Pancreas (tissue), 10 donors: ENCODE measurements at regions of chrX and their contacts with region 1.

Region 1: DNA sequence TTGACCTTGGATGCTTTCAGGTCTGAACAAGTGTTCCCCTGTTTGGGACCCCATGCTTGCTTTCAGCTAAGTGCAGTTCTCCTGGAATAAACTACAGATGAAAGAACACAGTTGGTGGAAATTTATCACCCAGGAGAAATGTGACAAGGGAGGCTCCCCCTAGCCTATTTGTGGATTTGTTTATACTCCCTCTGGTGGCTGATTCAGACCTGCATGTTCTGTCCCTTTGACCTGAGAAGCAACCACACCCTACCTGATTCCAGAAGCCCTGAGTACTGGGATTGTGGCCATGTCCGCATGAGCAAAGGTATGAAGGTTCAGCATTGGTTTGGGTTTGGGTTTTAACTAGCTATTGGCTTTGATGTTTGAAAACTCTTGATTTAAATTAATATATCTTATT is 440.9 kb downstream of the MID1IP1 start:
- DNase-seq: peak in 2 of 6 donors; percentile 10 to 38
- ATAC-seq: peak; percentile 53 to 91 (median 84)
- H3K4me3 ChIP-seq: no peak overlapping the region
- H3K27ac ChIP-seq: no peak overlapping the region
- H3K4me1 ChIP-seq: no peaks in the 10 kb centered on the region
- H3K27me3 ChIP-seq: peaks cover 0 to 7% (median 0%) of the 10 kb centered on the region in 4 donors
- CTCF ChIP-seq: peak; percentile 23 to 51 (median 40)

Region 2: DNA sequence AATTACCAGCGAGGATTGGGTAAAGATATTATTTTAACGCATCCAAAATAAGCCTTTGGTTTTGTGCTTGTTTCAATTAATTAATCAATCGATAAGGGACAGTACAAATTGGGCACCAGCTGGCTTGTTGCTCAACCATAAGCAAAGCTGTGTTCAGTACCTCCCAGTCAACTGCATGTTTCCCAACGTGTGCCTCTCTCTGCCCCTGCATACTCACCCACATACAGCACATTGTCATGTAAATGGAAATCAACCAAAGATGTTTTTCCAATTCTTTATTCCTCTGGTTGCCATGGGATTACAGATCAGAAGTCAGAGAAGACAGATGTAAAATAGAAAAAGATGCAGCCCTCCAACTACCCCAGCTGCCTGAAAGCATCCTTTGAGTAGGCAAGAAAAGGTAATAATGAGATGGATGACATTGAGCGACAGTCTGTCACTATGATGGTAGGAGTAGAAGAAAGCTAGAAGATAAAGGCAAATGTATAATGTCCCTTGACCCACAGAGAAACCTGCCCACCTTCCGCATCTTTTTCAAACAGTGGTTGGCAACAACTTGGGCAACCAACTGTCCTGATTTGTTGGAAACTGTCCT is 773.5 kb before region 1 on chrX:
- intact Hi-C with region 1: no loop called
- DNase-seq: no peak
- ATAC-seq: no peak
- H3K4me3 ChIP-seq: no peak overlapping the region
- H3K27ac ChIP-seq: no peak overlapping the region
- H3K4me1 ChIP-seq: no peaks in the 10 kb centered on the region
- H3K27me3 ChIP-seq: peaks cover 0 to 10% (median 0%) of the 10 kb centered on the region in 4 donors
- CTCF ChIP-seq: no peak

Region 3: GRCh38 chrX:38754102-38754790 is 487.9 kb before region 1 on chrX:
- intact Hi-C with region 1: loop called in 1 of 3 experiments (anchors 10 kb)
- DNase-seq: peak in 2 of 6 donors; percentile 4 to 41
- ATAC-seq: peak; percentile 77 to 94 (median 88)
- H3K4me3 ChIP-seq: no peak overlapping the region
- H3K27ac ChIP-seq: no peak overlapping the region
- H3K4me1 ChIP-seq: no peaks in the 10 kb centered on the region
- H3K27me3 ChIP-seq: peaks cover 0 to 7% (median 0%) of the 10 kb centered on the region in 4 donors
- CTCF ChIP-seq: peak in 3 of 4 donors; percentile 37 to 67 (median 59)

Region 4: GRCh38 chrX:38850807-38851544 is 391.2 kb before region 1 on chrX:
- intact Hi-C with region 1: no loop called
- DNase-seq: no peak
- ATAC-seq: no peak
- H3K4me3 ChIP-seq: no peak overlapping the region
- H3K27ac ChIP-seq: no peak overlapping the region
- H3K4me1 ChIP-seq: peaks cover 0 to 4% (median 0%) of the 10 kb centered on the region in 3 donors
- H3K27me3 ChIP-seq: peaks cover 0 to 23% (median 0%) of the 10 kb centered on the region in 4 donors
- CTCF ChIP-seq: no peak

Region 5: DNA sequence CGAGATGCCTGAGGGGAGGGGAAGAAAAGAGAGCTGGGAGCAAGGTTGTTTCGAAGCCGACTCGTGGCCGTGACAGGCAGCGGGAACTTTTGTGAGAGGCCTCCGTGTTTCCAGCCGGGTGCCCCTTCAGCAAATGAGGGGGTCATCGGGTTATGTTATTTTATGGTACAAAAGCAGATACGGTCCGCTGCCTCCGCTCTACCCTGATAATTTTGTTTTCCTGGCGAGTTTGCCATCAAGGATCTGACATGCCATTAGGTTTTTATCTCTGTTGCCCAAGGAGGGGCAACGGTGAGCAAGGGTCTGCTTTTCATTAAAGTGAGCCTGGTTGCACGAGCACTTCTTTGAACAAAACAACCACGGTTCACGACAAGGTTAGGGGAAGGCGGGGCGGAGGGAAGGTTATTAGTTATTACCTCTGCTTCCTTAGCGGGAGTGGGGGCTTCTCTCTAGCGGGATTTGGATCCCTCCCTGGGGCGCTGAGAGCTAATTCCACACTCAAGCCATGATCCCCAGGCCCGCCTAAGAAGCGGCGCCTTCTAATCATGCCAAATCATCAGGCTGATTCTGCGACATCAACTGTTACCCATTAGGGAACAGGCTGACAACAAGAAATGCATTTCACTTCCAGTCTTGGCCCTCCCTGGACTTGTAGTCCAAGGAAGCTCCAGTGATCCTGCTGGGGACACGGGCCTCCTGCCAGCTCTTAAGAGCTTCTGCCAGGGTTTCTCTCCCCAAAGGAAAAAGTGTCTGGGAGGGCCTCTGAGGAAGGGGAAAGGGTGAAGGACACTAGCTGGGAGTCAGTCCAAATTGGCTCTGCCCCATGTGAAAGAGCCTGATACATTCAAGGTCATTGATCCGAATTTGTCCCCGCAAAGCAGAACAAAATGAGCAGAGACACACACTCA is 176.8 kb after region 1 on chrX:
- intact Hi-C with region 1: no loop called
- DNase-seq: peak in 4 of 6 donors; percentile 22 to 33 (median 26)
- ATAC-seq: peak in 3 of 4 donors; percentile 50 to 63 (median 51)
- H3K4me3 ChIP-seq: no peak overlapping the region
- H3K27ac ChIP-seq: peak overlapping the region in 1 of 4 donors; percentile 11
- H3K4me1 ChIP-seq: no peaks in the 10 kb centered on the region
- H3K27me3 ChIP-seq: peaks cover 0 to 7% (median 0%) of the 10 kb centered on the region in 4 donors
- CTCF ChIP-seq: no peak

Region 6: DNA sequence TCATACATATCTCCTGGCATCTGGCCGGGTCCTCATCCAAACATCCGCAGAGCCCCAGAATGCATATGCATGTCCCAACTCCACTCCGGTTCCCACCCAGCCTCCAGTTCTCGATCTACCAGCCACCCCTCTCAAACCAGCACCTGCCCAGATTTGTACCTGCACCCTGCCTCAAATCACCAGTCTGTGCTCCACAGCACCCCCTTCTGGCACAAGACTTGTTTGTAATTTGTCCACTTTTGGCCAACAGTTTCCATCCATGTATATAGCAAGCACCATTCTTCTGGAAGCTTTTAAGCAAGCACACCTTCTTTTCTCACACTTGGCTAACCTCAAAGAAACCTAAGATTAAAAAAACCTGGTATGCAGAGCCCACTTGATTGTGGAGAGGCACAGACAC is 203.1 kb after region 1 on chrX:
- intact Hi-C with region 1: no loop called
- DNase-seq: peak in 2 of 6 donors; percentile 20 to 26
- ATAC-seq: no peak
- H3K4me3 ChIP-seq: no peak overlapping the region
- H3K27ac ChIP-seq: no peak overlapping the region
- H3K4me1 ChIP-seq: no peaks in the 10 kb centered on the region
- H3K27me3 ChIP-seq: peaks cover 0 to 5% (median 0%) of the 10 kb centered on the region in 4 donors
- CTCF ChIP-seq: peak in 1 of 4 donors; percentile 25